Natural killer cell (primary cell): ENCODE measurements at regions of chr5 and their contacts with region 1.

Region 1: DNA sequence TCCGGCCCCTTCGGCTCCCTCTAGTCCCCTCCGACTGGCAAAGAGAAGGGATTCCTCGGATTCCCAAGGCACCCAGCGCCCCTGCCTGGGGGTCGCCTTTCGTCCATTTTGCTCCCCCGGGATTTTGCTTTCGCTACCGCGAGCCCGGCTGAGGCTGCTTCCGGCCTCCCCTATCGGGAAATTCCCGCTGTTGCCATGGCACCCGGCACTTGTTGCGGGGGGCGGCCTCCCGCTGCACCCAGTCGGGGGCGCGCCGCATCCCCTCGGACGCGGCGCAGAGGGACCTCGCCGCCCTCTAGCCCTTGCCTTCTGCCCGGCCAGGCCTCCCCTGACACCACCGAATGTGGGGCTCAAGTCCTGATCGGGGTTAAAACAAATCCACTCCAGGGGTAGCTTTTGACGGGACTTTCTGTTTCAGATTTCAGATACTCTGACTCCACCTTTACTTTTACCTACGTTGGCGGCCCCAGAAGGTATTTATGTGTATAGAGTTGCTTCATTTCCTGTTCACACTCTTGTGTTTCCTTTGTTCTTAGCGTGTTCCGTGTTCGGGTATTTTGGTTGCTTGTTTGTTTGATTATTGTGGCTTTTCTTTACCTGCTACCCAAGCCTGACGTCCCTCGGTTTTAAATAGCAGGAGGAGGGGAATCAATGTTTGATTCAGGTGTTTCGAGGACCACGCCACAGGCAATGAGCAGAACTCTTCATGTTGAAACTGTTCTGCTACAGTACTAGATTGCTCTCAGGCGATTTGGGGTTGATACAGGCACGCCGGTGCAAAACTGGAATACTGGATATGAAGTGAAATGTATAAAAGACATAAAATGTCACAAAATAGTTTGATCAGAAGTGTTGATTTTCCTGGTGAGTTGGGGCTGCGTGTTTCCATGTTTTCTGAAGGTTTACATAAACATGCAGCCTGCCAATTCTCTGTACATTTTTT is 1.5 kb downstream of the PARP8 start:
- DNase-seq: peak; percentile 87 to 94
- ATAC-seq: peak; percentile 68 to 80 (median 79)
- H3K4me3 ChIP-seq: peak overlapping the region; percentile 96
- H3K4me3 Mint-ChIP-seq: peak overlapping the region; percentile 96
- H3K27ac ChIP-seq: peak overlapping the region; percentile 99
- H3K27ac Mint-ChIP-seq: peak overlapping the region; percentile 99 to 100
- H3K4me1 ChIP-seq: peaks cover 27% of the 10 kb centered on the region
- H3K4me1 Mint-ChIP-seq: peaks cover 61 to 62% of the 10 kb centered on the region in 2 donors
- H3K27me3 ChIP-seq: no peaks in the 10 kb centered on the region
- H3K27me3 Mint-ChIP-seq: no peaks in the 10 kb centered on the region
- CTCF ChIP-seq: no peak

Region 2: GRCh38 chr5:50564079-50564478 is 103.8 kb before region 1 on chr5:
- intact Hi-C with region 1: loop called (anchors 10 kb)
- DNase-seq: peak in 1 of 2 donors; percentile 71
- ATAC-seq: peak; percentile 94 to 98 (median 94)
- H3K4me3 ChIP-seq: no peak overlapping the region
- H3K4me3 Mint-ChIP-seq: peak overlapping the region; percentile 64
- H3K27ac ChIP-seq: peak overlapping the region; percentile 85
- H3K27ac Mint-ChIP-seq: peak overlapping the region; percentile 84 to 86
- H3K4me1 ChIP-seq: peaks cover 4% of the 10 kb centered on the region
- H3K4me1 Mint-ChIP-seq: peaks cover 31 to 50% of the 10 kb centered on the region in 2 donors
- H3K27me3 ChIP-seq: no peaks in the 10 kb centered on the region
- H3K27me3 Mint-ChIP-seq: no peaks in the 10 kb centered on the region
- CTCF ChIP-seq: no peak

Region 3: GRCh38 chr5:50595199-50595598 is 72.7 kb before region 1 on chr5:
- intact Hi-C with region 1: loop called (anchors 2 kb)
- DNase-seq: no peak
- ATAC-seq: peak in 1 of 3 donors; percentile 44
- H3K4me3 ChIP-seq: no peak overlapping the region
- H3K4me3 Mint-ChIP-seq: peak overlapping the region; percentile 45
- H3K27ac ChIP-seq: peak overlapping the region; percentile 38
- H3K27ac Mint-ChIP-seq: peak overlapping the region; percentile 82 to 84
- H3K4me1 ChIP-seq: peaks cover 27% of the 10 kb centered on the region
- H3K4me1 Mint-ChIP-seq: peaks cover 73 to 75% of the 10 kb centered on the region in 2 donors
- H3K27me3 ChIP-seq: no peaks in the 10 kb centered on the region
- H3K27me3 Mint-ChIP-seq: no peaks in the 10 kb centered on the region
- CTCF ChIP-seq: no peak

Region 4: GRCh38 chr5:50711273-50711672 is 43.3 kb after region 1 on chr5:
- intact Hi-C with region 1: loop called (anchors 2 kb)
- DNase-seq: peak; percentile 31 to 88
- ATAC-seq: peak; percentile 85 to 92 (median 88)
- H3K4me3 ChIP-seq: peak overlapping the region; percentile 4
- H3K4me3 Mint-ChIP-seq: peak overlapping the region; percentile 73
- H3K27ac ChIP-seq: peak overlapping the region; percentile 72
- H3K27ac Mint-ChIP-seq: peak overlapping the region; percentile 90 to 91
- H3K4me1 ChIP-seq: peaks cover 28% of the 10 kb centered on the region
- H3K4me1 Mint-ChIP-seq: peaks cover 74 to 81% of the 10 kb centered on the region in 2 donors
- H3K27me3 ChIP-seq: no peaks in the 10 kb centered on the region
- H3K27me3 Mint-ChIP-seq: no peaks in the 10 kb centered on the region
- CTCF ChIP-seq: no peak

Region 5: DNA sequence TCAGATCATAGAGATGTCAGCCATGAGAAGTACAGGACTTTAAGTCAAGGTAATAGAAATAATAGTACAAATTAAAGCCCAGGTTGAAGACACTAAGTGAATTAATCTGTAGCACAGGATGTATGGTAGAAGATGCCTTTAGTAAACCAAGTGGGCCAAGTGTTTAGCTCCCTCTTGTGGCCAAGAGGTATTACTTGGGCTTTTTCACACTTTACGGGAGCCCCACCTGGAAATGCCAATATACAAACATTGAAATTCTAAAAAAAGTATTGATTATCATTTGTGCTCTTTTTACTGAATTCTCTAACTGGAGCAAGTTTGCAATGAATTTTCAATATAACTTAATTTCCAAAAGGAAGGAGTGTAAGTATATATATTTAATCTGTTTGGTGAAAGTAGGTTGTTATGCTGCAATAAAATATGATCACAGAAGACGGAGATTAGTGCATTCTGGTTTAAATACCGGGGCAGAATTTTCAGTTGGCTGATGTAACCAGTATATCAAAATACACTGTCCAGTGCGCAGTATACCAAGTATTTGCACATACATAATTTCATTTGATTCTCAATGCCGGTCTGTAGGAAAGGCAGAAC is 83.2 kb after region 1 on chr5:
- intact Hi-C with region 1: loop called (anchors 2 kb)
- DNase-seq: peak in 1 of 2 donors; percentile 86
- ATAC-seq: peak; percentile 86 to 94 (median 93)
- H3K4me3 ChIP-seq: no peak overlapping the region
- H3K4me3 Mint-ChIP-seq: peak overlapping the region; percentile 69
- H3K27ac ChIP-seq: peak overlapping the region; percentile 48
- H3K27ac Mint-ChIP-seq: peak overlapping the region; percentile 83 to 86
- H3K4me1 ChIP-seq: peaks cover 3% of the 10 kb centered on the region
- H3K4me1 Mint-ChIP-seq: peaks cover 56 to 65% of the 10 kb centered on the region in 2 donors
- H3K27me3 ChIP-seq: no peaks in the 10 kb centered on the region
- H3K27me3 Mint-ChIP-seq: no peaks in the 10 kb centered on the region
- CTCF ChIP-seq: peak; percentile 96